ENCODE measurements at regions of chr5 and their contacts with region 1.

Region 1: GRCh38 chr5:79020861-79021561 is 35.9 kb upstream of the ARSB start:
- DNase-seq: peak; percentile 54
- ATAC-seq: peak; percentile 64
- H3K4me3 Mint-ChIP-seq: no peak overlapping the region
- H3K27ac Mint-ChIP-seq: no peak overlapping the region
- H3K4me1 Mint-ChIP-seq: peaks cover 5% of the 10 kb centered on the region
- H3K27me3 Mint-ChIP-seq: peaks cover 53% of the 10 kb centered on the region

Region 2: GRCh38 chr5:78899922-78900362 is 121.1 kb before region 1 on chr5:
- CTCF ChIA-PET with region 1: interaction called, 10 read pairs
- POLR2A ChIA-PET with region 1: no interaction called
- DNase-seq: peak; percentile 28
- ATAC-seq: no peak
- H3K4me3 Mint-ChIP-seq: no peak overlapping the region
- H3K27ac Mint-ChIP-seq: no peak overlapping the region
- H3K4me1 Mint-ChIP-seq: no peaks in the 10 kb centered on the region
- H3K27me3 Mint-ChIP-seq: no peaks in the 10 kb centered on the region

Region 3: GRCh38 chr5:78984439-78985115 is 36.4 kb before region 1 on chr5:
- CTCF ChIA-PET with region 1: interaction called, 24 read pairs
- POLR2A ChIA-PET with region 1: interaction called, 7 read pairs
- DNase-seq: peak; percentile 80
- ATAC-seq: peak; percentile 71
- H3K4me3 Mint-ChIP-seq: peak overlapping the region; percentile 89
- H3K27ac Mint-ChIP-seq: peak overlapping the region; percentile 95
- H3K4me1 Mint-ChIP-seq: peaks cover 45% of the 10 kb centered on the region
- H3K27me3 Mint-ChIP-seq: no peaks in the 10 kb centered on the region

Region 4: GRCh38 chr5:79042188-79042587 is 21.2 kb after region 1 on chr5:
- CTCF ChIA-PET with region 1: interaction called, 13 read pairs
- POLR2A ChIA-PET with region 1: no interaction called
- DNase-seq: no peak
- ATAC-seq: no peak
- H3K4me3 Mint-ChIP-seq: no peak overlapping the region
- H3K27ac Mint-ChIP-seq: no peak overlapping the region
- H3K4me1 Mint-ChIP-seq: no peaks in the 10 kb centered on the region
- H3K27me3 Mint-ChIP-seq: peaks cover 9% of the 10 kb centered on the region

Region 5: DNA sequence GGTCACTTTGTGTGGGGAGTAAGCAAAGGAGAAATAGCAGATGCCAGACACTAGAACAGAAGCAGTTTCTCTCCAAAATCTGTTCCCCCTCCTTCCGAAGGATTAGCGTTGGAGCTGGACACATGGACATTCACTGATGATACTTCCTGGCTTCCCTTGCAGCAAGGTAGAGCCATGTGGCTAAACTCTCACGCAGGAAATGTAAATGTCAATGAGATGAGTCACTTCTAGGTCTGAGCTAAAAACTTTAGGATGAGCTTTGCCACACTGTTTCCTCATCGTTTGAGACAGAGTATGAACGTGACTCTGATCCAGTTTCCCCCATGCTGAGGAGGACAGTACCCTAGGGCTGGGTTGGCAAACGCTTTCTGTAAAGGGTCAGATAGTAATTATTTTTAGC is 53.6 kb after region 1 on chr5:
- CTCF ChIA-PET with region 1: interaction called, 19 read pairs
- POLR2A ChIA-PET with region 1: no interaction called
- DNase-seq: no peak
- ATAC-seq: no peak
- H3K4me3 Mint-ChIP-seq: no peak overlapping the region
- H3K27ac Mint-ChIP-seq: no peak overlapping the region
- H3K4me1 Mint-ChIP-seq: peaks cover 12% of the 10 kb centered on the region
- H3K27me3 Mint-ChIP-seq: peaks cover 18% of the 10 kb centered on the region

Region 6: DNA sequence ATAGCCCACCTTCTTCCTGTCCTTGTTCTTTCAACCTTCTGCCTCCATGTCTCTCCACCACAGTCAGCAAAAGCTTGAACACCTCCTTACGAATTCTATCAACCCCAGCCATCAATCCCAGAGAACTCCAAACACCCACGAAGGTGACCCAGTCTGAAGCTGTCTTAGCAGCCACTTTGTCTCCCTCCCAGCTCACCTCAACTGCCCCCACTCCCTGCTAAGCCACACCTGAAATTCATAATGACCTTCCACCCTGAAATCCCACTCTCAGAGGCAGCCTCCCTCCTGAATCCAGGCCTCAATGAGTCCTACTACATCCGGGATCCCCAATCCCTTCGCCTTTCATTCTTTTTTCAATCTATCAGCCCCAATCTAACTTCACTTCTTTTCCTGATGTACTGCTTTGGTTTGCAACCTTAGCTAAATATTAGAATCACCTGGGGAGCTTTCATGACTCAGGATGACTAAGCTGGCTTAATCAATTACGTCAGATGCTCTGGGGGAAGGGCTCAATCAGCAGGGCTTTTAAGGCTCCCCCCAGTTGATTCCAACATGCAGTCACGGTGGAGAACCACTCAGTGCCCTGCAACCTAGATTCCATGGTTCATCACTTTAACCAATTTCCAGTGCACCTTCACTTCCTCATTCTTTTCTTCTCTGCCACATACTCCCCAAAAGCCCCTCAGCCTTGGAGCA is 122.8 kb after region 1 on chr5:
- CTCF ChIA-PET with region 1: interaction called, 14 read pairs
- POLR2A ChIA-PET with region 1: no interaction called
- DNase-seq: no peak
- ATAC-seq: no peak
- H3K4me3 Mint-ChIP-seq: no peak overlapping the region
- H3K27ac Mint-ChIP-seq: no peak overlapping the region
- H3K4me1 Mint-ChIP-seq: no peaks in the 10 kb centered on the region
- H3K27me3 Mint-ChIP-seq: peaks cover 5% of the 10 kb centered on the region

Measured in activated CD8-positive, alpha-beta T cell treated with anti-CD3 and anti-CD28 coated beads, Interleukin-2, amount 10 ng/mL, durations not matched to agents 7 days and 5 days (primary cell).